ENCODE measurements at regions of chr1 and their contacts with region 1.

Region 1: GRCh38 chr1:201348211-201348566 is 29.3 kb downstream of the TNNT2 start:
- DNase-seq: peak; percentile 60 to 73
- H3K4me3 ChIP-seq: no peak overlapping the region
- H3K4me3 Mint-ChIP-seq: no peak overlapping the region
- H3K27ac Mint-ChIP-seq: no peak overlapping the region
- H3K4me1 ChIP-seq: no peaks in the 10 kb centered on the region
- H3K4me1 Mint-ChIP-seq: no peaks in the 10 kb centered on the region
- H3K27me3 ChIP-seq: no peaks in the 10 kb centered on the region; the same call in 1 of the 2 replicates
- H3K27me3 Mint-ChIP-seq: peaks cover 16% of the 10 kb centered on the region
- CTCF ChIP-seq: peak; percentile 42 to 74

Region 2: GRCh38 chr1:201309426-201309825 is 38.8 kb before region 1 on chr1:
- CTCF ChIA-PET with region 1: interaction called, 19 read pairs
- POLR2A ChIA-PET with region 1: no interaction called
- intact Hi-C with region 1: loop called (anchors 1 kb)
- DNase-seq: peak; percentile 84
- H3K4me3 ChIP-seq: no peak overlapping the region
- H3K4me3 Mint-ChIP-seq: no peak overlapping the region
- H3K27ac Mint-ChIP-seq: no peak overlapping the region
- H3K4me1 ChIP-seq: peaks cover 27% of the 10 kb centered on the region
- H3K4me1 Mint-ChIP-seq: peaks cover 8% of the 10 kb centered on the region
- H3K27me3 ChIP-seq: no peaks in the 10 kb centered on the region
- H3K27me3 Mint-ChIP-seq: peaks cover 5% of the 10 kb centered on the region
- CTCF ChIP-seq: peak; percentile 26 to 70

Region 3: DNA sequence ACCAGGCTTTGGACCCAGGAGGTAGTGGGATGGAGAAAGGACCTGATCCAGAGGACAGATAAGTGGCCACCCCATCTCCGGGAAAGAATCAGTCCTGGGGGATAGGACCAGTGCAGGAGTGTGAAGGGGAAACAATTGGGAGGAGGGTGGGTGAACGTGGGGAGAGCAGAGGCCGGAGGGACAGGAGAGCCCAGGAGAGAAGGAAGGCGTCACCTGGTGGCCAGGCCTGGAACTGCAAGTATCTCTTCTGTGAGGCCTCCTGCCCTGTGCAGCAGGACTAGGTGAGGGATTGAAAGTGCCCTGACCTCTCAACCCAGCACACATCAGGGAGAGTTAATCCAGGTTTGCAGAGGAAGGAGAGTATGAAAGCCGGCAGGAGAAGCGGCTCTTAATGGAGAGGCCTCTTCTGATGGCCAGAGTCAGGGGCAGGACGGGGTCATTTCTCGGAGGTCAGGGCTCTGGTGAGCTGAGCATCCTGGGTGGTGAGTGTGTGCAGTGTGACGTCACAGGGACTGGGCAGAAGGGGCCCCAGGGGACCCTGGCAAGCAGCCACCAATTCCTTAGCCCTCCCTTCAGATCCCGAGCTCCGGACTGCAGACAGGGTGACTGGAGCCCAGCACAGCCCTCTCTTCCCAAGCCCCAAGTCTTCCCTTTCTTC is 60.1 kb after region 1 on chr1:
- CTCF ChIA-PET with region 1: interaction called, 10 read pairs
- POLR2A ChIA-PET with region 1: no interaction called
- intact Hi-C with region 1: loop called (anchors 5 kb)
- DNase-seq: peak; percentile 89 to 90
- H3K4me3 ChIP-seq: no peak overlapping the region
- H3K4me3 Mint-ChIP-seq: no peak overlapping the region
- H3K27ac Mint-ChIP-seq: peak overlapping the region; percentile 23
- H3K4me1 ChIP-seq: peaks cover 42% of the 10 kb centered on the region
- H3K4me1 Mint-ChIP-seq: peaks cover 11% of the 10 kb centered on the region
- H3K27me3 ChIP-seq: no peaks in the 10 kb centered on the region
- H3K27me3 Mint-ChIP-seq: no peaks in the 10 kb centered on the region
- CTCF ChIP-seq: peak; percentile 90 to 96